Sciatic nerve (tissue), 2 donors: ENCODE measurements at regions of chr7 and their contacts with region 1.

Region 1: DNA sequence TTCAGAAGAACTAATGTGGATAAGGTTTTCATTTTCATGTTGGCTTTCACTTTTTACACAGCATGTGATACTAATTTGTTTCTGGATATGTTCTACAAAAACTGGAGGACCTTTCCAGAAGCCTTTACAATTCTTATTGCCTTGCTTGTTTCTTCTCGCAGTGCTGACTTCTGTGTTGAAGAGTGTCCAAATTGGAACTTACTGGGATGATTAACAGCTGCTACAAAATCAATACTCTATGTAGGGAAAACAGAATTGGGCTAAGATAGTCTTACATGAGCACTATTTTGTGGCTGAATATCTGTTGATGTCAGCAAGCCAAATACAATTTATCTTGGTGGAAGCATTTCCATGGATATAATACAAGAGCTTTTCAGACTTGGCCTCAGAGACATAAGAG is 351.2 kb downstream of the DGKB start:
- DNase-seq: no peak
- ATAC-seq: no peak

Region 2: DNA sequence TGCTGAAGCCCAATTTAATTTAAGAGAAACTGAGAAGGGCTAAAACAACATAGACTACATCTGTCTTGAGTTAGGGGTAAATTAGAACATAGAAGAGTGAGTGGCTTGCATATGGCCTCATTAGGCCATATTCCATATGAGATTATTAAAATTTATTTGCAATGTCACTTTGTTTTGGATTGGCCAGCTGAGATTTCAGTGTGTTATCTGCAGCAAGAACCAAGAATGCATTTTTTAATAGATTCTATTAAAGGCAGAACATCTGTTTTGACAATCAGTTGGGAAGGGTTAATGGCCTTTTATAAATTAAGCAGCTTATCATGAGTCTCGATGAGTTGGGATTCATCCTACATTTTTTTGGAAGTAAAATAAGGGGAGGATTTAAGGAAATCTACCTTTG is 115.0 kb after region 1 on chr7:
- intact Hi-C with region 1: no loop called
- DNase-seq: no peak
- ATAC-seq: no peak

Region 3: GRCh38 chr7:16409777-16410176 is 1858.5 kb after region 1 on chr7:
- intact Hi-C with region 1: loop called (anchors 5 kb)
- DNase-seq: no peak
- ATAC-seq: peak; percentile 80